ENCODE measurements at regions of chr1 and their contacts with region 1.

Region 1: DNA sequence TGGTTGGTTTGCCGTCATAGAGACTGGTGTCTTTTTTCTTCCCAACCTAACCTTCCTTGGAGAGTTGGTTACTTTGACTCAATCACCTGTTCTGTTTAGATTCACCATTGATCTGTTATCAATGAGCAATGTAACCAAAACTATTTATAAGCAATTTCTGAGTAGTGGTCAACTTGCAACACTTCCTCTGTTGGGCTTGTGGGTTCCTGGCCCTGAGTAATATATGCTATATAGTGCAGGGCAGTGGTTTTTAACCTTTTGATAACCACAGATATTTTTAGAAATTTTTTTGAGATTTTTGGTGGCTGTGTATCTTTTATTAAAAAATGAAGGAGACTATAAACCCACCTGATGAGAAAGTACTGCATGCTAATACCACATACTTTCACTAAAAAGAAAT is 9.4 kb upstream of the XCL1 start:
- DNase-seq: no peak
- H3K4me3 ChIP-seq: no peak overlapping the region
- H3K27ac ChIP-seq: no peak overlapping the region
- H3K4me1 ChIP-seq: no peaks in the 10 kb centered on the region
- H3K27me3 ChIP-seq: peaks cover 0 to 5% of the 10 kb centered on the region in 2 donors
- CTCF ChIP-seq: no peak

Region 2: DNA sequence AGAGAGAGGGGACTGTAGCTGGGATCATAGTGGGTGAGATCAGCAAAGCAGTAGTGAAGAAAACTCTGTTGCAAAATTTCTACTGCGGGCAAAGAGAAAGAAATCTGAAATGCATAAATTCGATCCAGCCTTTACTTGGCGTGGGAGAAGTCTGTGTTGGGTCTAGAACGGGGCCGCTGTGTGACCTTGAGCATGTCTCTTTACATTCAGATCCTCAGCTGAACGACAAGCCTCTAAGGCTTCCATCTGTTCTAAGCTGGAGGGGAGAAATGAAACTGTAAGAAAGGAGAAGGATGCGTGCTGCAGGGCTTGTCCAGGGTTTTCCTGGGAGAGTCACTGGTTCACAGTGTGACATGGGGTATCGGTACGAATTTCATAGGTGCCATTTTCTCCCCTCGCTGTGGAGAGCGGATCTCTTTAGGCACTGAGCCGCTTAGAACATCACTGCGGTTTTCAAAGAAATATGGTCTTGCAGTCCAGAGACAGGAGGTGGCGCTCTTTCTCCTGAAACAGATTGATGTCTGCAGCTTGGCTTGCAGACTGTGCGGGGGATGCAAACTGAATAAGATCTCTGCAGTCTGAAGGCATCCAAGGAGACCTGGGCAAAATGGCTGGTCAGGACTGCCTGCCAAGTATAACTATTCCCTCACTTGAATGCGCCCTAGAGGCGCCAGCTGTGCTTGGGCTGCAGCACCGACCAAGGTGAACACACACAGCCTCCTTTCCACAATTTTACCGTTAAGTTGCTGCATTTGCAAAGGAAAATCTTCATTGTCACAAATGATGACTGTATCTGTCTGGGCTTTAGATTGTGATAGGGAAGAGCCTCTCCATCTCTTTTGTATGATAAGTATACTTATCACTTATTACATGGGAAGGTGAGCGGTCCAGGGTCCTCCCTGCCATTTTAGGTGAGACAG is 127.3 kb before region 1 on chr1:
- intact Hi-C with region 1: loop called (anchors 10 kb)
- DNase-seq: peak; percentile 72 to 77
- H3K4me3 ChIP-seq: peak overlapping the region in 1 of 2 donors; percentile 11
- H3K27ac ChIP-seq: no peak overlapping the region
- H3K4me1 ChIP-seq: peaks cover 0 to 6% (median 0%) of the 10 kb centered on the region in 4 donors
- H3K27me3 ChIP-seq: peaks cover 0 to 5% of the 10 kb centered on the region in 2 donors
- CTCF ChIP-seq: peak; percentile 65

Region 3: GRCh38 chr1:168520052-168520751 is 46.8 kb before region 1 on chr1:
- intact Hi-C with region 1: no loop called
- DNase-seq: no peak
- H3K4me3 ChIP-seq: no peak overlapping the region
- H3K27ac ChIP-seq: no peak overlapping the region
- H3K4me1 ChIP-seq: no peaks in the 10 kb centered on the region
- H3K27me3 ChIP-seq: peaks cover 0 to 4% of the 10 kb centered on the region in 2 donors
- CTCF ChIP-seq: no peak

Measured in tibial artery (tissue), 4 donors.